ENCODE measurements at regions of chr11 and their contacts with region 1.

Region 1: GRCh38 chr11:116879800-116880625 is 42.6 kb upstream of the APOA1 start:
- DNase-seq: peak in 4 of 9 experiments; percentile 15 to 76 (median 44)
- ATAC-seq: peak; percentile 75
- H3K4me3 ChIP-seq: no peak overlapping the region
- H3K4me3 Mint-ChIP-seq: no peak overlapping the region
- H3K27ac ChIP-seq: no peak overlapping the region
- H3K27ac Mint-ChIP-seq: no peak overlapping the region
- H3K4me1 ChIP-seq: no peaks in the 10 kb centered on the region
- H3K4me1 Mint-ChIP-seq: peaks cover 5% of the 10 kb centered on the region
- H3K27me3 ChIP-seq: no peaks in the 10 kb centered on the region
- H3K27me3 Mint-ChIP-seq: no peaks in the 10 kb centered on the region
- CTCF ChIP-seq: peak; percentile 71

Region 2: DNA sequence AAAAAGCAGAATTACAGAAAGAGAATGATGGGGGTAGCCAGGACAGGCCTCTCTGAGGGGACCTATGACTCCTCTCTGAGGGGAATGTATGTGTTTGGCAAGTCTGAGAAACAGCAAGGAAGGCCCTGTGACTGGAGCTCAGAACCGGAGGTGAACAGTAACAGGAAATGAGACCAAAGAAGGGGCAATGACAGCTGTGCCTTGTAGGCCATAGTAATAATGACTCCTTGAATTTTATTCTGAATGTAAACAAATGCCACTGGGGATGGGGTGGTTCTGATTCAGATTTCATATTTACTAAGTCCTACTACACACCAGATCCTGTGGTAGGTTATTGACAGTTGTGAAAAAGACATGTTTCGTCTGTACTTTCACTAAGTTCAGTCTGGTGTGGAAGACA is 10.2 kb after region 1 on chr11:
- CTCF ChIA-PET with region 1: interaction called, 29 read pairs
- POLR2A ChIA-PET with region 1: no interaction called
- intact Hi-C with region 1: no loop called
- DNase-seq: peak in 2 of 9 experiments; percentile 29 to 41
- ATAC-seq: peak; percentile 70
- H3K4me3 ChIP-seq: no peak overlapping the region
- H3K4me3 Mint-ChIP-seq: no peak overlapping the region
- H3K27ac ChIP-seq: peak overlapping the region in 1 of 2 experiments; percentile 53
- H3K27ac Mint-ChIP-seq: peak overlapping the region; percentile 5
- H3K4me1 ChIP-seq: peaks cover 7% of the 10 kb centered on the region
- H3K4me1 Mint-ChIP-seq: peaks cover 21% of the 10 kb centered on the region
- H3K27me3 ChIP-seq: no peaks in the 10 kb centered on the region
- H3K27me3 Mint-ChIP-seq: no peaks in the 10 kb centered on the region
- CTCF ChIP-seq: no peak

Region 3: GRCh38 chr11:117010808-117011540 is 131.0 kb after region 1 on chr11:
- CTCF ChIA-PET with region 1: no interaction called
- POLR2A ChIA-PET with region 1: no interaction called
- intact Hi-C with region 1: no loop called
- DNase-seq: no peak
- ATAC-seq: peak; percentile 31
- H3K4me3 ChIP-seq: no peak overlapping the region
- H3K4me3 Mint-ChIP-seq: no peak overlapping the region
- H3K27ac ChIP-seq: no peak overlapping the region
- H3K27ac Mint-ChIP-seq: no peak overlapping the region
- H3K4me1 ChIP-seq: peaks cover 12% of the 10 kb centered on the region
- H3K4me1 Mint-ChIP-seq: peaks cover 33% of the 10 kb centered on the region
- H3K27me3 ChIP-seq: no peaks in the 10 kb centered on the region
- H3K27me3 Mint-ChIP-seq: no peaks in the 10 kb centered on the region
- CTCF ChIP-seq: no peak